Gastrocnemius medialis (tissue), 4 donors: ENCODE measurements at regions of chr9 and their contacts with region 1.

Region 1: DNA sequence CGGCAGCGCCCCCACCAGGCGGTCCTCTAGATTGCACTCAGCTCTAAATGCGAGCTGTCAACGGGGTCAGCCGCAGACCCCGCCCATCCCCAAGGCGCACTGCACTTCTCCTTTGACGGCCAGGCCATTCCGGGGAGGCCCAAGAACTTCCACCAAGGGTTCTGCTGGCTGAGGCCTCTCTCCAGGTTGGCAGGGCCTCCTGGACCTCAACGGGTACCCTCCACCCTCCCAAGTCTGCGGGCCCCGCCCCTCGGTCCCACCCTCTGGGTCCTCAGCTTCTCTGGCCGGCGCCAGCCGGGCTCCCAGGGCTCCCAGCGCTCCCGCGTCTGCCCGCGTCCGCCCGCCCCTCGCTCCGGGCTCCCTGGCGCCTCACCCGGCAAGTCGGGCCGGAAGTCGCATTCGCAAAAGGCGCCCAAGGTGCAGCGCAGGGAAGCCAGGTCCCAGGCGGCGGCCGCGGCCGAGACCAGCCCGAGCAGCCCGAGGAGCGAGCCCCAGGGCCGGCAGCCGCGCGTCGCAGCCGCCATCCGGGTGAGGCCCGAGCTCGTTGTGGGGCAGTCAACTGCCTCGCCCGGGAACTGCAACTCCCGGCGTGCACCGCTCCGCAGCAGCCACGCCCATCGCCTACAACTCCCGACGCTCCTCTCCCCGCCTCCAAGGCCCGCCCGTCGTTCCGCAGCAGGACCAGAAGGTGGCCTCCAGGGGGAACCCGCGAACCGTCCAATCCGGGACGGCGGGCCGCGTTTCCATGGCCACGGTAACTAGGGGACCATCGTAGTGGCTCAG is at the start of gene TOR2A:
- DNase-seq: peak; percentile 95 to 96
- ATAC-seq: peak; percentile 91 to 93
- H3K4me3 ChIP-seq: peak within 1 kb of the TSS; percentile 55 to 85 (median 70)
- H3K27ac ChIP-seq: peak within 1 kb of the TSS; percentile 86 to 98 (median 91)
- H3K4me1 ChIP-seq: peaks cover 14 to 23% of the 10 kb centered on the region in 2 donors
- H3K27me3 ChIP-seq: no peaks in the 10 kb centered on the region
- CTCF ChIP-seq: peak; percentile 95 to 99 (median 98)
- POLR2A ChIP-seq: peak; percentile 91 to 92
- total RNA-seq, gene TOR2A: 3.2 to 10.6 (median 9.6) TPM

Region 2: GRCh38 chr9:127503947-127504782 is 230.8 kb before region 1 on chr9:
- in situ Hi-C with region 1: loop called in 1 of 4 experiments (anchors 10 kb)
- intact Hi-C with region 1: loop called (anchors 1 kb)
- DNase-seq: peak; percentile 53 to 73
- ATAC-seq: peak; percentile 74 to 85
- H3K4me3 ChIP-seq: no peak overlapping the region
- H3K27ac ChIP-seq: peak overlapping the region in 1 of 4 donors; percentile 20
- H3K4me1 ChIP-seq: no peaks in the 10 kb centered on the region
- H3K27me3 ChIP-seq: no peaks in the 10 kb centered on the region
- CTCF ChIP-seq: peak; percentile 75 to 92 (median 86)
- POLR2A ChIP-seq: no peak

Region 3: GRCh38 chr9:127611899-127612790 is 122.8 kb before region 1 on chr9 and contains the start of gene STXBP1:
- in situ Hi-C with region 1: no loop called
- intact Hi-C with region 1: loop called (anchors 1 kb)
- DNase-seq: peak; percentile 78 to 84
- ATAC-seq: peak; percentile 81 to 87
- H3K4me3 ChIP-seq: peak within 1 kb of the TSS; percentile 62 to 82 (median 73)
- H3K27ac ChIP-seq: peak within 1 kb of the TSS; percentile 81 to 89 (median 86)
- H3K4me1 ChIP-seq: peaks cover 30 to 33% of the 10 kb centered on the region in 2 donors
- H3K27me3 ChIP-seq: no peaks in the 10 kb centered on the region
- CTCF ChIP-seq: peak in 3 of 5 experiments; percentile 27 to 32 (median 31)
- POLR2A ChIP-seq: peak; percentile 92
- total RNA-seq, gene STXBP1: 3.4 to 36.8 (median 9.2) TPM

Region 4: GRCh38 chr9:127770905-127771569 is 36.1 kb after region 1 on chr9:
- in situ Hi-C with region 1: no loop called
- intact Hi-C with region 1: loop called (anchors 1 kb)
- DNase-seq: peak; percentile 96 to 97
- ATAC-seq: peak; percentile 93 to 94
- H3K4me3 ChIP-seq: peak overlapping the region; percentile 58 to 69 (median 66)
- H3K27ac ChIP-seq: peak overlapping the region; percentile 56 to 81 (median 76)
- H3K4me1 ChIP-seq: peaks cover 11 to 18% of the 10 kb centered on the region in 2 donors
- H3K27me3 ChIP-seq: no peaks in the 10 kb centered on the region
- CTCF ChIP-seq: peak in 1 of 5 experiments; percentile 15
- POLR2A ChIP-seq: peak in 1 of 2 donors; percentile 66

Region 5: DNA sequence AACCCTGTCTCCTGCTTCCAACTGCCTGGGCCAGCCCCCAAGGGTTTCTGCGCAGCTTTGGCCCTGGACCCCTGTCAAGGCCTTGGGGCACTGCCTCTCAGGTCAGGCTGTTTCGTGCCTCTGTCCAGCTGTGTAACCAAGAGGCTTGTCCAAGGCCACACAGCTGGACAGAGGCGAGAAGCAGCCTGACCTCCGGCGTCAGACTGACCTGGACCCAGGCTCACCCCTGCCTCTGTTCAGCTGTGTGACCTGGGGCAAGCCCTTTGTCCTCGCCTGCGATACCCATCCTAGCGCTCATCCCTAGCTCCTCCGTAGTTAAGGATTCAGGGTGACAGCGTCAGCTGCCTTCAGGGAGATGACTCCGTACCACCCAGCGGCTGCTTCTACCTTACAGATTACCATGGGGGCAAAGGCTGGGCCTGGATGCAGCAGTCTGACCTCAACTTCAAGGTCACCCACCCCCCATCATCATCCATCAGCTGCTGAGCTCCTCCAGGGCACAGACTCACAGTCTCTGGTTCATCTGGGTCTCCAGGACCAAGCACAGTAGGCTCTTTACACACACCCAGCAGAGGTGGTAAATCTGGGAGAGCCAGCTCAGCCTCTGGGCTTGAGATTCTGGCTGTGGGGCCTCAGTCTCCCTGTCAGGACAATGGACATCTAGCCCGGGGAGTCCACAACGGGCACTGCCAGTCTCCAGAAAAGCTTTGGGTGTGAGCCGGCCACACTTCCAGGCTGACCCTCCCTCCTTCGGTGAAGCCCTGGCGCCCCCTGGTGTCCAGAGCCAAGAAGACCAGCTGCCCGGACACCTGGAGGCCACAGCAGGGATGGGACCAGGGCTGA is 134.6 kb after region 1 on chr9:
- in situ Hi-C with region 1: loop called in 1 of 4 experiments (anchors 5 kb)
- intact Hi-C with region 1: loop called (anchors 2 kb)
- DNase-seq: peak; percentile 78 to 85
- ATAC-seq: peak; percentile 66 to 72
- H3K4me3 ChIP-seq: no peak overlapping the region
- H3K27ac ChIP-seq: peak overlapping the region; percentile 34 to 77 (median 69)
- H3K4me1 ChIP-seq: peaks cover 15 to 23% of the 10 kb centered on the region in 2 donors
- H3K27me3 ChIP-seq: no peaks in the 10 kb centered on the region
- CTCF ChIP-seq: peak; percentile 83 to 92 (median 91)
- POLR2A ChIP-seq: no peak

Region 6: GRCh38 chr9:127991042-127991756 is 256.3 kb after region 1 on chr9:
- in situ Hi-C with region 1: no loop called
- intact Hi-C with region 1: no loop called
- DNase-seq: no peak
- ATAC-seq: no peak
- H3K4me3 ChIP-seq: no peak overlapping the region
- H3K27ac ChIP-seq: no peak overlapping the region
- H3K4me1 ChIP-seq: peaks cover 14 to 25% of the 10 kb centered on the region in 2 donors
- H3K27me3 ChIP-seq: no peaks in the 10 kb centered on the region
- CTCF ChIP-seq: no peak
- POLR2A ChIP-seq: no peak